ENCODE measurements at regions of chr4 and their contacts with region 1.

Region 1: GRCh38 chr4:44678094-44679041 is at the start of gene GUF1:
- DNase-seq: peak; percentile 94
- ATAC-seq: peak; percentile 92
- H3K4me3 Mint-ChIP-seq: peak within 1 kb of the TSS; percentile 87
- H3K27ac Mint-ChIP-seq: peak within 1 kb of the TSS; percentile 93
- H3K4me1 Mint-ChIP-seq: peaks cover 34% of the 10 kb centered on the region
- H3K27me3 Mint-ChIP-seq: no peaks in the 10 kb centered on the region
- total RNA-seq, gene GUF1: 38.3 to 46.7 TPM

Region 2: GRCh38 chr4:44629280-44629866 is 49.0 kb before region 1 on chr4:
- CTCF ChIA-PET with region 1: no interaction called
- POLR2A ChIA-PET with region 1: no interaction called
- intact Hi-C with region 1: no loop called
- DNase-seq: peak; percentile 59
- ATAC-seq: peak; percentile 82
- H3K4me3 Mint-ChIP-seq: no peak overlapping the region
- H3K27ac Mint-ChIP-seq: no peak overlapping the region
- H3K4me1 Mint-ChIP-seq: peaks cover 2% of the 10 kb centered on the region
- H3K27me3 Mint-ChIP-seq: no peaks in the 10 kb centered on the region

Region 3: DNA sequence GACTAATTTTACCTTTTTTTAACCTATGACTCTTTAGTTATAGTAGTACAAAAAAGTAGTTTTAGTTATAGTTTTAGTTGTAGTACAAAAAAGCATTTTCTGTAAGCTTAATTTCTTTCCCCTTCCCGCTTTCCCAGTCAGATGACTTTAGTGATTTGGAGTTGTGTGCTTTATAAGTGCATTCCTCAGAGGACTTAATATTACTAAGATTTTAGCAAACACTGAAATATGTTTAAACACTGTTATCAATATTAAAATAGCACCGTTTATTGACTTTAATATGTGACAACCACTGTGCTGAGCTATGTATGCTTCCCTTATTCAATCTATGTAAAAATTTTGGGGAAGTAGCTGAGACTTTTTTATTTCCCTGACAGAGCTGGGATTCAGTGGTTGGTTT is 22.7 kb after region 1 on chr4:
- CTCF ChIA-PET with region 1: interaction called, 4 read pairs
- POLR2A ChIA-PET with region 1: interaction called, 7 read pairs
- intact Hi-C with region 1: loop called in 1 of 2 experiments (anchors 2 kb)
- DNase-seq: no peak
- ATAC-seq: no peak
- H3K4me3 Mint-ChIP-seq: no peak overlapping the region
- H3K27ac Mint-ChIP-seq: no peak overlapping the region
- H3K4me1 Mint-ChIP-seq: peaks cover 2% of the 10 kb centered on the region
- H3K27me3 Mint-ChIP-seq: no peaks in the 10 kb centered on the region